ENCODE measurements at regions of chr17 and their contacts with region 1.

Region 1: DNA sequence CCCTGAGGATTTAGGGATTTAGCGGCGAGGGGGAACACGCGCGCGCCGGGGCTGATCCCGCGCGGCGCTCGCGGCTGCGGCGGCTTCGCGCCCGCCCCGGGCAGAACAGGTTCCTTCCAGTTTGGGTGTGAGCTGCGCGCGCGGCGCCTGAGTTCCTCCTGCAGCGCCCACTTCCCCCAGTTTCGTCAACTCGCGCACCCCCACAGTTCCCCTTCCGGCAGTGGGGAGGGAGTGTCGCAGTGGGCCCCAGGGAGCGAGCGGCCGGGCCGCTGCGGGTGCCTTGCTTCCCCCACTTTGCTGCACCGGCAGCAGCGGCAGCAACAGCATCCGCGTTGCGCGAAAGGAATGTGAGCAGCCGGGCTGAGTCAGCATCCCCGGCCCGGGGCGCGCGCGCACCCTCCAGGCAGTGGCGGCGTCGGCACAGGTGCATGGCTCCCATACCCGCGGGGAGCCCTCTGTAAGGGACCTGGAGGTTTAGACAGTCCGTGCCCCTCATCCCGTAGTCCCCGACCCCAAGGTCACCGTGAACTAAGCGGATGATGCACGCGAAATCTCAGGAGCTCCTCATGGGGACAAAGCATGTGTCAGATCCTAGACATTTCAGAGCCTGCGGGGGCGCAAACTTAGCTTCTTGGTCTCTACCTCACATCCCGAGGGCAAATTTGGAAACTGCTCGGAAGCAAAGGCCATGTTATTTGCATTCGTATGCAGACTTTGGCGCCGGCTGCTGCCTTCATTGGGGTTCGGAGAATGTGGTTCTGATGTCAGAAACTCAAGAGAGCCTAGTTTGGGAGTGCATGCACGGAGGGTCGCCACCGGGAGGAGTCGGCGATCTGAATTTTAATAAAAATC is 775 bp downstream of the ARSG start:
- DNase-seq: peak; percentile 97
- ATAC-seq: peak; percentile 81
- H3K4me3 Mint-ChIP-seq: peak overlapping the region; percentile 85
- H3K27ac Mint-ChIP-seq: peak overlapping the region; percentile 97
- H3K4me1 Mint-ChIP-seq: peaks cover 73% of the 10 kb centered on the region
- H3K27me3 Mint-ChIP-seq: no peaks in the 10 kb centered on the region

Region 2: GRCh38 chr17:68205251-68205807 is 86.7 kb before region 1 on chr17:
- CTCF ChIA-PET with region 1: interaction called, 5 read pairs
- POLR2A ChIA-PET with region 1: interaction called, 18 read pairs
- DNase-seq: peak; percentile 95
- ATAC-seq: peak; percentile 87
- H3K4me3 Mint-ChIP-seq: peak overlapping the region; percentile 85
- H3K27ac Mint-ChIP-seq: peak overlapping the region; percentile 89
- H3K4me1 Mint-ChIP-seq: peaks cover 42% of the 10 kb centered on the region
- H3K27me3 Mint-ChIP-seq: peaks cover 4% of the 10 kb centered on the region

Region 3: GRCh38 chr17:68247445-68248198 is 44.4 kb before region 1 on chr17 and contains the start of gene AMZ2:
- CTCF ChIA-PET with region 1: no interaction called
- POLR2A ChIA-PET with region 1: interaction called, 23 read pairs
- DNase-seq: peak; percentile 96
- ATAC-seq: peak; percentile 89
- H3K4me3 Mint-ChIP-seq: peak within 1 kb of the TSS; percentile 81
- H3K27ac Mint-ChIP-seq: peak within 1 kb of the TSS; percentile 97
- H3K4me1 Mint-ChIP-seq: peaks cover 37% of the 10 kb centered on the region
- H3K27me3 Mint-ChIP-seq: no peaks in the 10 kb centered on the region
- total RNA-seq, gene AMZ2: 79.9 to 80.0 TPM

Region 4: GRCh38 chr17:68314916-68315535 is 23.0 kb after region 1 on chr17:
- CTCF ChIA-PET with region 1: interaction called, 3 read pairs
- POLR2A ChIA-PET with region 1: interaction called, 13 read pairs
- DNase-seq: peak; percentile 46
- ATAC-seq: peak; percentile 41
- H3K4me3 Mint-ChIP-seq: peak overlapping the region; percentile 32
- H3K27ac Mint-ChIP-seq: peak overlapping the region; percentile 76
- H3K4me1 Mint-ChIP-seq: peaks cover 68% of the 10 kb centered on the region
- H3K27me3 Mint-ChIP-seq: no peaks in the 10 kb centered on the region

Region 5: DNA sequence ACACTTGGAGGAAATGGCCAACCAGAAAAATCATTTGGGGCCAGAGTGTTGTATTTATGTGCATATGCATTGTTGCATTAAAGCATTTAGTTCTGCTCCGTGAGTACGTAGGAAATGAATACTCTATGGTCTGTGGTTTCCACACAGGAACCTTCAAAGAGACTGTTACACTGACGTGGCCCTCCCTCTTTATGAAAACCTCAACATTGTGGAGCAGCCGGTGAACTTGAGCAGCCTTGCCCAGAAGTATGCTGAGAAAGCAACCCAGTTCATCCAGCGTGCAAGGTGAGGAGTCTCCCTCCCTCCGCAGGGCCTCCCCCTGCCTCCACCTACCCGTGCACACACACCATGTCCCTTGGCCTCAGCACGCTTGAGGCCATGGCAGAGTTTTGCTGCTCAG is 64.5 kb after region 1 on chr17:
- CTCF ChIA-PET with region 1: interaction called, 9 read pairs
- POLR2A ChIA-PET with region 1: interaction called, 24 read pairs
- DNase-seq: peak; percentile 88
- ATAC-seq: peak; percentile 94
- H3K4me3 Mint-ChIP-seq: peak overlapping the region; percentile 60
- H3K27ac Mint-ChIP-seq: peak overlapping the region; percentile 86
- H3K4me1 Mint-ChIP-seq: peaks cover 75% of the 10 kb centered on the region
- H3K27me3 Mint-ChIP-seq: no peaks in the 10 kb centered on the region

Region 6: DNA sequence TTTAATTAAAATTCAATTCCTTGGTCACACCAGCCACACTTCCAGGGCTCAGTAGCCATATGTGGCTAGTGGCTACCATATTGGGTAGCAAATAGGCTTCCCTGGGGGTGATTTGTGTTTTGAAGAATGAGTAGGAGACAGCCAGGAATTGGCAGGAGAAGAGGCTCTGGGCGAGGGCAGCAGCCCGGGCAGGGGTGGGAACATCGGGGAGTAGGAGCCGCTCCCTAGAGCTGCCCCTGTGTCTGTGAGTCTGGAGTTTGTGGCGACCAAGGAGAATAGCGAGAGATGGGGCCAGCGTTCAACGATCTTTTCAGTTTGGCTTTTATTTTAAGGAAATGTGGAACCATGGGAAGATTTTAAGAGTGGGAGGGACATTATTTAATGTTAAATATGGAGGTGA is 83.5 kb after region 1 on chr17:
- CTCF ChIA-PET with region 1: no interaction called
- POLR2A ChIA-PET with region 1: no interaction called
- DNase-seq: no peak
- ATAC-seq: no peak
- H3K4me3 Mint-ChIP-seq: no peak overlapping the region
- H3K27ac Mint-ChIP-seq: no peak overlapping the region
- H3K4me1 Mint-ChIP-seq: no peaks in the 10 kb centered on the region
- H3K27me3 Mint-ChIP-seq: no peaks in the 10 kb centered on the region

Region 7: DNA sequence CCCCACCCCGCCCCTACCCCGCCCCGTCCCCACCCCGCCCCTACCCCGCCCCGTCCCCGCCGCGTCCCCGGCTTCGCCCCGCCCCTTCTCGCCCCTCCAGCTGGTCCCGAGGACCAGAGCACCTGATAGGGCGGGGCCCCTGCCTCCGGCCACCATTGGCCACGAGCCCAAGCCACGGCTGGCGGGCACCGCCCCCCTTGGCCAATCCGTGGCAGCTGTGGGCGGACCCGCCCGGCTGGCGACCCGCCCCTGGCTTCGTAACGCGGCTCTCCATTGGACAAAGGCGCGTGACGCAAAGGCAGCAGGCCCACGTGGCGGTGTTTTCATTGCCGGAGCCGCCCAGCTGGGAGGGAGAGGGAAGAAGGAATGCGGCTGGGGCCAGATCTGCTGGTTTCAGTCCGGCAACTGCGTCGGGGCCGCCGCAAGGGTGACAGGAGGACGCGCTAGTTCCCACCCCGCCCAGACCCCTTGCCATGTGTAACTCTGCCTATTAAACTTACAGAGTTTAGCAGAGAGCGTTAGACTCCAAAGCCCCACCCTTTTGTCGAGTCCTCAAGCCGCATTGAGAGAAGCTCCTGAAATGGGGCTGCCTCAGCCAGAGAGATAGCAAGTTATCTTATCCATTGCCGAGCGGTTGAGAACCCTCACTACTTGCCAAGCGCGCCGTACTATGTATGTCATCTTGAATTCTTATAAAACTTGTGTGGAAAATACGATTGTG is 165.6 kb after region 1 on chr17:
- CTCF ChIA-PET with region 1: interaction called, 14 read pairs
- POLR2A ChIA-PET with region 1: interaction called, 11 read pairs
- DNase-seq: peak; percentile 98
- ATAC-seq: peak; percentile 95
- H3K4me3 Mint-ChIP-seq: peak overlapping the region; percentile 77
- H3K27ac Mint-ChIP-seq: peak overlapping the region; percentile 88
- H3K4me1 Mint-ChIP-seq: peaks cover 82% of the 10 kb centered on the region
- H3K27me3 Mint-ChIP-seq: no peaks in the 10 kb centered on the region